H1 (cell line): ENCODE measurements at regions of chr6 and their contacts with region 1.

Region 1: DNA sequence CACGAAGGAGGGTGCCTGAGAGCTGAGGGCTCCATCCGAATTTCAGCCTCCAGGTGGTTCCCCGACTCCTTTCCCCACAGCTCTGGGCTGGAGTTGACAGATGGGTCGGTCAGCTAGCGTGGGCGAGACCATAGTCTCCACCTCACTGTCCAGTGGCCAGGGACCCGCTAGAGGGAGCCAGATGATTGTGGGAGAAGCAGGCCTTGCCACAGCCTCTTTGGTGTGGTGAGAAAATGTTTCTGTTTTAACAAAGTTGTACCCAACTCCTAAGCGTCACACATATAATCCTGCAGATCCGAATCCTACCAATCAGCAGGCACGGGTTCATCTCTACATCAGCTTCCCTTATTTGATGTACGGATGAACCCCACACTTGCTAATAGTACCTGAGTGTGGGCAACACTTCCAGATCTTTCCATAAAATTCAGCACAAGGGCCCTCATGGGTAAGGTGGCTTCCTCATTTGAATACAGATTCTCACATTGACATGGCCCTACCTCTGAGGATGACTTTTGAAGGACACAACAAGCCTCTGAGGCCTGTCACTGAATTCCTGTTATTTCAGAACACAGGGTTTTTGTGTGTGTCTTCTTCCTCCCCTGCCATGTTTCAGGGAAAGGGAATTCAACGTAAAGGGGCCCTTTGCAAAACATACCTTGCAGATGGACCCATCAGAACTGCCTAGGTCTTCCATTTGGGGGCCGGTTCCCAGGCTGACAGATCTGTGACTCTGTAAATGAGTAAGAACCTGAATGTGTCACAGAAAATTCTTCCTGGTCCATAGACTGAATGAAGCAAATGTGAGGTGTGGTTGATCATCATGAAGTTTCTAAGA is 103.2 kb upstream of the DUSP22 start:
- DNase-seq: peak; percentile 78 to 88
- H3K4me3 ChIP-seq: no peak overlapping the region
- H3K27ac ChIP-seq: no peak overlapping the region
- H3K4me1 ChIP-seq: no peaks in the 10 kb centered on the region; a peak in 1 of 7 replicates
- H3K27me3 ChIP-seq: no peaks in the 10 kb centered on the region
- CTCF ChIP-seq: peak; percentile 81 to 99 (median 97)
- EP300 ChIP-seq: no peak
- POLR2A ChIP-seq: no peak
- RAD21 ChIP-seq: peak; percentile 99

Region 2: DNA sequence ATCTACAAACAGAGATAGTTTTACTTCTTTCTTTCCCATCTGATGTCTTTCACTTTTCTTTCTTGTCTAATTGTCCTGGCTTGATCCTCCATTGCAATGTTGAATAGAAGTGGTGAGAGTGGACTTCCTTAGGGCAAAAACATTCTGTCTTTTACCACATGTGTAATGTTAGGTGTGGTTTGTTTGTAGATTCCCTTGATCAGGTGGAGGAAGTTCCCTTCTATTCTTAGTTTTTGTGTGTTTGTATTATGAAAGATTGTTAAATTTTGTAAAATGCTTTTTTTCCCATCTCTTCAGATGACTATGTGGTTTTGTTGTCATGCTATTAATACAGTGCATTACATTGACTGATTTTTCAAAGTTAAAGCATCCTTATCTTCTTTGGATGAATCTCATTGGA is 61.6 kb after region 1 on chr6:
- CTCF ChIA-PET with region 1: no interaction called
- POLR2A ChIA-PET with region 1: no interaction called
- DNase-seq: no peak
- H3K4me3 ChIP-seq: no peak overlapping the region
- H3K27ac ChIP-seq: no peak overlapping the region
- H3K4me1 ChIP-seq: no peaks in the 10 kb centered on the region
- H3K27me3 ChIP-seq: no peaks in the 10 kb centered on the region
- CTCF ChIP-seq: no peak
- EP300 ChIP-seq: no peak
- POLR2A ChIP-seq: no peak
- RAD21 ChIP-seq: no peak

Region 3: DNA sequence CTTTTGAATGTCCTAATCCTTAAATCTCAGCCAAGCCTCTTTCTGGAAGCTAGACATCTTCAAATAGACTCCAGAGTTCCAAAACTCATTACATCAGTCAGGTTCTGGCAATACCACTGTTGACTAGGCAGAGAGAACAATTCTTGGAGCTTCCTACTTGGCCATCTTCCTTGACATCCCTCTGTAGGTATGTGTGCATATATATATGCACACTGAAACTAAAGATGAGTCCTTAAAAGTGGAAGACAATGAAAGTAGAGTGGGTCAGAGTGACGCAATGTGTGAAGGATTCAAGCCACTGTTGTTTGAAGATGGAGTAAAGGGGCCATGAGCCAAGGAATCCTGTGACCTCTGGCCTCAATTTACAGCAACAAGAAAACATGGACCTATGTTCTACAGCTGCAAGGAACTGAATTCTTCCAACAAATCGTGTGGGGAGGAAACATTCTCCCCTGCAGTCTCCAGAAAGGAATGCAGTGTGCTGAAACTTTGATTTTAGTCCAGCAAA is 84.6 kb after region 1 on chr6:
- CTCF ChIA-PET with region 1: no interaction called
- POLR2A ChIA-PET with region 1: no interaction called
- DNase-seq: no peak
- H3K4me3 ChIP-seq: no peak overlapping the region
- H3K27ac ChIP-seq: no peak overlapping the region
- H3K4me1 ChIP-seq: no peaks in the 10 kb centered on the region
- H3K27me3 ChIP-seq: no peaks in the 10 kb centered on the region
- CTCF ChIP-seq: no peak
- EP300 ChIP-seq: no peak
- POLR2A ChIP-seq: no peak
- RAD21 ChIP-seq: no peak

Region 4: DNA sequence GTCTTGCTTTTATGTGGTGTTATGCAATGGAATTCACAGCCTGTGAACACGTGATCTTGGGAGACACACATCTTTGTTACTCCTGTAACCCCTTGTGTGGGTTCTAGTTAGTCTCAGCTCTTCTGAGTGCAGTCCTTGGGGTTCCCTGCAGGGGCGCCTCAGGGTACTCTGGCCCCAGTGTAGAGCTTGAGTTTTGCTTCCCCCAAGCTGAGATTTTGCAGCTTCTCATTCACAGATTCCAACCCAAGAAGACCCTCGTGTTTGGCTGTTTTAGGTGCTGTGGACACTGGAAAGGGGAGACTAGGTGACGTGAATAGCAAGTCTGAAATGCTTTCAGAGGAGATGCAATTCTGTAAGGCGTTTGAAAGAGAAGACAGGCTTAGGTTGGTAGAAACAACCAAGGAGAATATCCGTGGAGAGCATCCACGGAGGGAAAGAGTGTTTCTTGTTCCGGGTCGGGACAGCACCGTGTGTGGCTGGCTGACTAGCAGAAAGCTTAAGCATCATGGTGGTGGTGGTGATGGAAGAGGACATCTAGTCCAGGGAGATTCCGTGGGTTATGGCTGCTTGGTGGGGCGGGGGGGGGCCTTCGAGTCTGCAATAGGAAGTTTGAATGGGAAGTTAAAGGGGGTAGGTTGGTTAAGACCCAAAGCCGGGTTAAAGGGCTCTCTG is 133.4 kb after region 1 on chr6:
- CTCF ChIA-PET with region 1: interaction called, 10 read pairs
- POLR2A ChIA-PET with region 1: no interaction called
- DNase-seq: no peak
- H3K4me3 ChIP-seq: no peak overlapping the region
- H3K27ac ChIP-seq: no peak overlapping the region
- H3K4me1 ChIP-seq: peaks cover 0 to 5% (median 3%) of the 10 kb centered on the region in 4 experiments; a peak in 3 of 7 replicates
- H3K27me3 ChIP-seq: no peaks in the 10 kb centered on the region; a peak in 2 of 7 replicates
- CTCF ChIP-seq: peak; percentile 20 to 43 (median 26)
- EP300 ChIP-seq: no peak
- POLR2A ChIP-seq: no peak
- RAD21 ChIP-seq: no peak; a peak in 2 of 4 replicates

Region 5: DNA sequence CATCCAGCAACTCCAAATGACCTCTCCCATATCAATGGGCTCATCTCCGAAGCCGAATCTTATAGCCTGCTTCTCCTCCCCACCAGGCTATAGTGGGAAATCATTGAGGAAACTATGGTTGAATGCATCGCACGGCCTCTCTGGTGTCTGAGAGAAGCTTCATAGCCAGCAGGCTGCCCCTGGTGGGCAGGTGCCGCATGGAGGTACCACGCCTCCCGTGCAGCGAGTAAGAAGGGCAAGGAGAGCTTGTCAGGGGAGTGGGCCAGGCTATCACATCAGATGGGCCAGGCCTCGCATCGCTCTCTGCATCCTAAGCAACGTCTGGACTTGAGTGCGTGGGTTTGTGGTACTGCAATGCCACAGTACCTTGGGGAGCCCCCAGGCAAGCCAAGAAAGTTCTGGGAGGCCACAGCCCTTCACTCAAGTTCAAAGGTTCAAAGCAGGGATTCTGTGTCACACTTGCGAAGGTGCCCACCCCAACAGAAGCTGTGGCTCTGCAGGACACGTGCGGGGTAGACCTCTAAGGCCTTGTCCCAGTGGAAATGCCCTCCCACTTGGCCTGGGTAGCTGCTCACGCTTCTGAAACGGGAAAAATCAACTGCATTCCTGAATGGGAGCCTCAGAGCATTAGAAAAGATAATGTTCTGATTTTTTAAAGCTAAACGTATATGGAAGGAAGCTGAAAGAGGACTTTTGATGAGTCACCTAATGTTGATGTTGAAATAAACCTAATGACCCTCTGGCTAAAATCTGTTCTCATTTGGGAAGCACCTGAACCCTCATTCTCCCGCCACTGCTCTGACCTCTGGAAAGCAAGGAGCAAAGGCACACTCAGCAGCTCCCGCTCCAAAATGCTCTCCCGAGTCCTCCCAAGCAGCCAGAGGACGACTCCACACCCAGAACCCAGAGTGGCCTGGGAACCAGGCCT is 194.1 kb after region 1 on chr6:
- CTCF ChIA-PET with region 1: interaction called, 12 read pairs
- POLR2A ChIA-PET with region 1: no interaction called
- DNase-seq: no peak
- H3K4me3 ChIP-seq: no peak overlapping the region
- H3K27ac ChIP-seq: no peak overlapping the region
- H3K4me1 ChIP-seq: no peaks in the 10 kb centered on the region
- H3K27me3 ChIP-seq: no peaks in the 10 kb centered on the region; a peak in 1 of 7 replicates
- CTCF ChIP-seq: peak in 1 of 3 experiments; percentile 41; a peak in 1 of 4 replicates
- EP300 ChIP-seq: no peak
- POLR2A ChIP-seq: no peak
- RAD21 ChIP-seq: peak in 1 of 2 experiments; percentile 23; a peak in 1 of 4 replicates

Region 6: GRCh38 chr6:408599-409102 is 219.6 kb after region 1 on chr6:
- CTCF ChIA-PET with region 1: interaction called, 35 read pairs
- POLR2A ChIA-PET with region 1: no interaction called
- DNase-seq: no peak
- H3K4me3 ChIP-seq: no peak overlapping the region
- H3K27ac ChIP-seq: no peak overlapping the region
- H3K4me1 ChIP-seq: peaks cover 0 to 4% (median 0%) of the 10 kb centered on the region in 4 experiments; a peak in 1 of 7 replicates
- H3K27me3 ChIP-seq: no peaks in the 10 kb centered on the region
- CTCF ChIP-seq: peak; percentile 51 to 62 (median 53)
- EP300 ChIP-seq: no peak
- POLR2A ChIP-seq: no peak
- RAD21 ChIP-seq: peak in 1 of 2 experiments; percentile 53